Aorta (tissue), 5 donors: ENCODE measurements at regions of chr4 and their contacts with region 1.

Region 1: GRCh38 chr4:120071192-120071795 is 4.6 kb upstream of the MAD2L1 start:
- DNase-seq: no peak
- ATAC-seq: no peak
- H3K4me3 ChIP-seq: no peak overlapping the region
- H3K27ac ChIP-seq: no peak overlapping the region
- H3K4me1 ChIP-seq: no peaks in the 10 kb centered on the region
- H3K27me3 ChIP-seq: no peaks in the 10 kb centered on the region

Region 2: DNA sequence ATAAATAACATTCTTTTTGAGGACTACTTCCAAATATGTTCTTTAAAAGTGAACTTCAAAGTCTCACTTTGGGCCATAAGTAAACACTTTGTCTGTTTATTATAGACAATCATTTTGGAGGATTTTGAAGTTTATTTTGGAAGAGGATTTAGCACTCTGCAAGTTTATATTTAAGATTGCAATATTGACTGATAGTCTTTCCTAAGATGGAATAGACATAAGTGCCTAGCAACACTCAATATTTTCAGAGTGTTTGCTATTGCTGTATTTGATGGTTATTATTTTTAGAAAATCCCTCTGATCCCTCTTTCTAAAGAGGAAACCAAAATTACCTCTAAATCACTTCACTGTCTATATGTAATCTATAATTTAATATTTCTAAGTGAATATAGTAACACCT is 38.1 kb after region 1 on chr4:
- intact Hi-C with region 1: no loop called
- DNase-seq: no peak
- ATAC-seq: no peak
- H3K4me3 ChIP-seq: no peak overlapping the region
- H3K27ac ChIP-seq: no peak overlapping the region
- H3K4me1 ChIP-seq: no peaks in the 10 kb centered on the region
- H3K27me3 ChIP-seq: no peaks in the 10 kb centered on the region

Region 3: GRCh38 chr4:120922381-120923206 is 851.3 kb after region 1 on chr4 and contains the start of gene PRDM5:
- intact Hi-C with region 1: loop called in 1 of 2 experiments (anchors 5 kb)
- DNase-seq: peak; percentile 69 to 87
- ATAC-seq: peak; percentile 87
- H3K4me3 ChIP-seq: peak within 1 kb of the TSS; percentile 61 to 95
- H3K27ac ChIP-seq: peak within 1 kb of the TSS; percentile 72 to 85
- H3K4me1 ChIP-seq: peaks cover 0 to 2% of the 10 kb centered on the region in 2 donors
- H3K27me3 ChIP-seq: no peaks in the 10 kb centered on the region
- total RNA-seq, gene PRDM5: 14.0 to 26.0 TPM

Region 4: GRCh38 chr4:121096629-121097028 is 1025.3 kb after region 1 on chr4:
- intact Hi-C with region 1: loop called (anchors 10 kb)
- DNase-seq: no peak
- ATAC-seq: no peak
- H3K4me3 ChIP-seq: no peak overlapping the region
- H3K27ac ChIP-seq: no peak overlapping the region
- H3K4me1 ChIP-seq: no peaks in the 10 kb centered on the region
- H3K27me3 ChIP-seq: no peaks in the 10 kb centered on the region

Region 5: GRCh38 chr4:121252224-121252806 is 1181.0 kb after region 1 on chr4:
- intact Hi-C with region 1: loop called in 1 of 2 experiments (anchors 5 kb)
- DNase-seq: peak; percentile 67 to 76
- ATAC-seq: peak; percentile 76
- H3K4me3 ChIP-seq: no peak overlapping the region
- H3K27ac ChIP-seq: no peak overlapping the region
- H3K4me1 ChIP-seq: no peaks in the 10 kb centered on the region
- H3K27me3 ChIP-seq: no peaks in the 10 kb centered on the region